Stomach (tissue), 19 donors: ENCODE measurements at regions of chr16 and their contacts with region 1.

Region 1: GRCh38 chr16:56317998-56318826 is 107.1 kb downstream of the AMFR start:
- DNase-seq: peak; percentile 82 to 95
- H3K4me3 ChIP-seq: peak overlapping the region; percentile 25 to 33 (median 27)
- H3K27ac ChIP-seq: peak overlapping the region in 1 of 5 donors; percentile 71
- H3K4me1 ChIP-seq: peaks cover 4 to 18% (median 11%) of the 10 kb centered on the region in 4 donors
- H3K27me3 ChIP-seq: peaks cover 0 to 6% (median 0%) of the 10 kb centered on the region in 3 donors
- CTCF ChIP-seq: peak in 6 of 7 experiments; percentile 51 to 93 (median 92)
- EP300 ChIP-seq: no peak
- POLR2A ChIP-seq: no peak

Region 2: GRCh38 chr16:55944377-55944802 is 373.8 kb before region 1 on chr16:
- intact Hi-C with region 1: loop called (anchors 5 kb)
- DNase-seq: peak; percentile 54 to 91
- H3K4me3 ChIP-seq: no peak overlapping the region
- H3K27ac ChIP-seq: no peak overlapping the region
- H3K4me1 ChIP-seq: peaks cover 0 to 4% (median 0%) of the 10 kb centered on the region in 4 donors
- H3K27me3 ChIP-seq: peaks cover 0 to 13% (median 0%) of the 10 kb centered on the region in 3 donors
- CTCF ChIP-seq: peak in 5 of 7 experiments; percentile 54 to 91 (median 87)
- EP300 ChIP-seq: no peak
- POLR2A ChIP-seq: no peak

Region 3: DNA sequence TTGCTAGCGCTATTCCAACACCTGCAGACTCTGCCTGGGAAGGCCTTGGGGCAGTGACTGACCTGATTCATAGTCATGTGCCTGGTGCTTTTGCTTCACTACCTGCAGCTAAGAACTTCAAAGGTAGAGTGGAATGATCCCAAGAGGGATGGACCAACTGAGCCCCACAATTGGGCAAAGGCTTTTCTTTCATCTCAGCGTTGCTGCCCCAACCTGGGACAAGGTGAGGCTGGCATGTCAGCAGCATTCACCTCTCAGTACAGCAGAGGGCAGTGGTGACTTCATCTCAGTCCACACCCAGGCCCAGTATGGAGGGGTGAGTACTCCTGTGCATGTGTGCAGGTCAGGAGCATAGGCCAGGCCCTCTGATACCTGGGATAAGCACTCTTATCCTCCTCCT is 276.5 kb before region 1 on chr16:
- intact Hi-C with region 1: loop called (anchors 10 kb)
- DNase-seq: peak in 1 of 2 donors; percentile 63
- H3K4me3 ChIP-seq: no peak overlapping the region
- H3K27ac ChIP-seq: no peak overlapping the region
- H3K4me1 ChIP-seq: no peaks in the 10 kb centered on the region
- H3K27me3 ChIP-seq: no peaks in the 10 kb centered on the region
- CTCF ChIP-seq: peak in 2 of 7 experiments; percentile 3 to 13
- EP300 ChIP-seq: no peak
- POLR2A ChIP-seq: no peak

Region 4: DNA sequence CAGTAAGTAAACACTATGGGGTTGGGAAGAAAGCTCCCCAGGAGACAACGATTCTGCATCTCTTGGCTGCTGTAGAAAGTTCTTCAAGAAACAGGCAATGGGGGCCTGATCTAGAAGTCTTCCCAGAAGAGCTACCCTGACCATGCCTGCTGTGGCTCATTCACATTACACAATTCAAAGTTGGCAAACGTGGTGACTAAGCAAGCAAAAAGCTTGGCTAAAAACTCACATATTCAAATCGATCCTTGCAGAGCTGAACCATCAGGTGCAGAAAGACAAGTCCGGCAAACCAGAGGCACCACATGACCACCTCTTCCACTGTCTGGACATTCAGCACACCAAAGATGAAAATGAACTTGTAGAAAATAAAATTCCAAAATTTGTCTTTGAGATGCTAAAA is 91.0 kb after region 1 on chr16:
- intact Hi-C with region 1: no loop called
- DNase-seq: no peak
- H3K4me3 ChIP-seq: no peak overlapping the region
- H3K27ac ChIP-seq: peak overlapping the region in 4 of 5 donors; percentile 12 to 62 (median 49)
- H3K4me1 ChIP-seq: peaks cover 0 to 10% (median under 1%) of the 10 kb centered on the region in 4 donors
- H3K27me3 ChIP-seq: no peaks in the 10 kb centered on the region
- CTCF ChIP-seq: no peak
- EP300 ChIP-seq: no peak
- POLR2A ChIP-seq: no peak